ENCODE measurements at regions of chr1 and their contacts with region 1.

Region 1: DNA sequence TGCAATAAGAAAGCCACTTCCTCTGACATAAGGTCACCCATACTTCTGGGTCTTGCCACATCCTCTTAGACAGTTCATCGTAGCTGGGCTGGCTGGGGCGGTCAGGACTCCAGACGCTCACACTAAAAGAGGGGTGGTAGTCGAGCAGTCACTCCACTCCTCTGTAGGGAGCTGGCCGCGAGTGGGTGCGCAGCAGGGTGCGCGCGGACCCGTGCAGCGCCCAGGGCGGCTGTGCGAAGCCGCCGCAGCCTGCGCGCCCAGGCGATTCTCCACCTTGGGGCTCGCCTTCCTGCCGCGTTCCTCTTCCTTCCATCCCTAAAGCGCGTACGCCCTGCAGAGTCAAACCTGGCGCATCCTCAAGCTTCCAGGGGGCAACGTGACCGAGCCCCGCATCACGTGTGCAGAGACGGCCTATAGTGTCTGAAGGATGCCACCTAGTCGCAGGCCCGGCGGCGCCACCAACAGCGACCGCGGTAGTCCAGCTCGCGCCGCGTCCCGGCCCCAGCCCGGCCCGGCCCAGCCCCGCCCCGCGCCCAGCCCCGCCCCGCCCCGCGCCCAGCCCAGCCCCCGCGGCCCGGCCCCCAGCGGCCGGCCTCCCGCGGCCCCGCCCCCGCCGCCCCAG is 360 bp upstream of the PRDX6 start:
- DNase-seq: peak; percentile 96 to 97 (median 96)
- ATAC-seq: peak; percentile 90
- H3K4me3 ChIP-seq: peak overlapping the region; percentile 89
- H3K27ac ChIP-seq: peak overlapping the region; percentile 82
- H3K4me1 ChIP-seq: peaks cover 11 to 34% of the 10 kb centered on the region in 2 experiments
- H3K27me3 ChIP-seq: no peaks in the 10 kb centered on the region
- CTCF ChIP-seq: peak in 1 of 3 experiments; percentile 17; a peak in 1 of 6 replicates
- EP300 ChIP-seq: no peak; the same call in 1 of the 2 replicates
- POLR2A ChIP-seq: 0 out of 2 replicates have a peak, but pooled peaks have one; percentile 54
- RAD21 ChIP-seq: peak in 1 of 2 experiments; percentile 32; a peak in 2 of 4 replicates

Region 2: DNA sequence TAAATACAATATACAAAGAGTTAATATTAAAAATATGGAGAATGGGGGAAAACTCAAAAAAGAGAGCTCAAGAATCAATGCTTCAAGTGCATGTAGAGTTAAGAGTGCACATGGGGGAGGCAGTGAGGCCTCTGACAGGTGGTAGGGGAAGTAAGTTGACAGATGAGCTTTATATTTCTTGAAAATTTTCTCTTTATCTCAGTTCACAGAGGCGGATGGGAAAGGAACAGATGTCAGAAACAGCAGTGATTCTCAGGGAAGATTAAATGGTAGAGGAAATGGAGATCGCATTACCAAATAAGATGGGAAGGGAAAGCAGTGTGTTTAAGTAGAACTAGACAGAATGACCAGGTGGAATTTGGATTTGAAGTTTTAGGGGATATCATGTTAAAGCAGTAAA is 1256.4 kb before region 1 on chr1:
- CTCF ChIA-PET with region 1: no interaction called
- POLR2A ChIA-PET with region 1: no interaction called
- in situ Hi-C with region 1: no loop called
- intact Hi-C with region 1: no loop called
- DNase-seq: no peak
- ATAC-seq: no peak
- H3K4me3 ChIP-seq: no peak overlapping the region
- H3K27ac ChIP-seq: no peak overlapping the region
- H3K4me1 ChIP-seq: no peaks in the 10 kb centered on the region
- H3K27me3 ChIP-seq: no peaks in the 10 kb centered on the region
- CTCF ChIP-seq: no peak
- EP300 ChIP-seq: no peak
- POLR2A ChIP-seq: no peak
- RAD21 ChIP-seq: no peak

Region 3: DNA sequence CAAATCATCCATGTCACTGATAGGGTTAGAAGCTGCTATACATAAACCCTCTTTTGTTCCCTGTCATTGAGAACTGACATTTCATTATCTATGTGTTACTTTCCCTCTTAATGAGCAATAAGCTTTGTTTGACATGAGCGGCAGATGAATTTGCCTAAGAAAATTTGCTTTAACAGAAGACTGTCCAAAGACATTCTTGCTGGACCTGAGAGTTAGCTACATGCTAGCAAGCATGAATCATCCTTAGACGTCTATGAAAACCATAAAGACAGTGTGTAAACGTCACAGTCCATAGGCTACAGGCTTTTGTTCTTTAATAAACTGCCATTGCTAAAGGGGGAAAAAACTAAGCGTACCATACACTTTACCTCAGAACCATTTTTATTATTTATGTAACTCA is 342.7 kb before region 1 on chr1:
- CTCF ChIA-PET with region 1: no interaction called
- POLR2A ChIA-PET with region 1: no interaction called
- in situ Hi-C with region 1: no loop called
- intact Hi-C with region 1: no loop called
- DNase-seq: no peak
- ATAC-seq: no peak
- H3K4me3 ChIP-seq: no peak overlapping the region
- H3K27ac ChIP-seq: no peak overlapping the region
- H3K4me1 ChIP-seq: no peaks in the 10 kb centered on the region
- H3K27me3 ChIP-seq: peaks cover 0 to 4% of the 10 kb centered on the region in 2 experiments; a peak in 1 of 5 replicates
- CTCF ChIP-seq: no peak
- EP300 ChIP-seq: no peak
- POLR2A ChIP-seq: no peak
- RAD21 ChIP-seq: no peak

Region 4: GRCh38 chr1:173255214-173255813 is 221.5 kb before region 1 on chr1:
- CTCF ChIA-PET with region 1: no interaction called
- POLR2A ChIA-PET with region 1: no interaction called
- in situ Hi-C with region 1: no loop called
- intact Hi-C with region 1: loop called (anchors 5 kb)
- DNase-seq: peak; percentile 60 to 77 (median 66)
- ATAC-seq: peak; percentile 87
- H3K4me3 ChIP-seq: no peak overlapping the region
- H3K27ac ChIP-seq: no peak overlapping the region
- H3K4me1 ChIP-seq: peaks cover 0 to 7% of the 10 kb centered on the region in 2 experiments; a peak in 1 of 5 replicates
- H3K27me3 ChIP-seq: no peaks in the 10 kb centered on the region
- CTCF ChIP-seq: peak; percentile 51 to 92 (median 77); a peak in 5 of 6 replicates
- EP300 ChIP-seq: no peak; the same call in 1 of the 2 replicates
- POLR2A ChIP-seq: no peak
- RAD21 ChIP-seq: peak; percentile 72 to 89

Region 5: DNA sequence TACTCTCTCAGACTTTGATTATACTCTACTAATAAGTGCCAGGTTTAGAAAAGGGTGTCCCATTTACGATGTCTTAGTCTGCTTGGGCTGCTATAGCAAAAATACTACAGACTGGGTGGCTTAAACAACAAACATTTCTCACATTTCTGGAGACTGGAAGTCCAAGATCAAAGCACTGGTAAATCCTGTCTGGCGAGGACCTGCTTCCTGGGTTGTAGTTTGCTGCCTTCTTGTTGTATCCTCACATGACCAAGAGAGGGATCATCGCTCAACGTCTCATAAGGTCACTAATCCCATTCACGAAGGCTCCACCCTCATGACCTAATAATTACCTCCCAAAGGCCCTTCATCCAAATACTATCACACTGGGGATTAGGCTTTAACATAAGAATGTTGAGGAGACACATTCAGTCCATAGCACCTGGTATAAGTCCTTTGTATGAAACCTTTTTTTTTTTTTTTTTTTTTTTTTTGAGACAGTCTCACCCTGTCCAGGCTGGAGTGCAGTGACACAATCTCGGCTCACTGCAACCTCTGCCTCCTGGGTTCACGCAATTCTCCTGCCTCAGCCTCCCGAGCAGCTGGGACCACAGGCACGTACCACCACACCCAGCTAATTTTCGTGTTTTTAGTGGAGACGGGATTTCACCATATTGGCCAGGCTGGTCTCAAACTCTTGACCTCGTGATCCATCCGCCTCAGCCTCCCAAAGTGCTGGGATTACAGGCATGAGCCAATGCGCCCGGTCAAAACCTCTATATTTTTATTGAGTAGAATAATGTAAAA is 12.6 kb after region 1 on chr1:
- CTCF ChIA-PET with region 1: no interaction called
- POLR2A ChIA-PET with region 1: interaction called, 39 read pairs
- in situ Hi-C with region 1: no loop called
- intact Hi-C with region 1: no loop called
- DNase-seq: peak in 2 of 4 experiments; percentile 36 to 58
- ATAC-seq: peak; percentile 85
- H3K4me3 ChIP-seq: no peak overlapping the region
- H3K27ac ChIP-seq: no peak overlapping the region
- H3K4me1 ChIP-seq: no peaks in the 10 kb centered on the region
- H3K27me3 ChIP-seq: no peaks in the 10 kb centered on the region
- CTCF ChIP-seq: peak; percentile 34 to 47 (median 45); a peak in 3 of 6 replicates
- EP300 ChIP-seq: no peak
- POLR2A ChIP-seq: peak; percentile 65
- RAD21 ChIP-seq: peak in 1 of 2 experiments; percentile 54; a peak in 3 of 4 replicates